Heart left ventricle (tissue), 16 donors: ENCODE measurements at regions of chr5 and their contacts with region 1.

Region 1: DNA sequence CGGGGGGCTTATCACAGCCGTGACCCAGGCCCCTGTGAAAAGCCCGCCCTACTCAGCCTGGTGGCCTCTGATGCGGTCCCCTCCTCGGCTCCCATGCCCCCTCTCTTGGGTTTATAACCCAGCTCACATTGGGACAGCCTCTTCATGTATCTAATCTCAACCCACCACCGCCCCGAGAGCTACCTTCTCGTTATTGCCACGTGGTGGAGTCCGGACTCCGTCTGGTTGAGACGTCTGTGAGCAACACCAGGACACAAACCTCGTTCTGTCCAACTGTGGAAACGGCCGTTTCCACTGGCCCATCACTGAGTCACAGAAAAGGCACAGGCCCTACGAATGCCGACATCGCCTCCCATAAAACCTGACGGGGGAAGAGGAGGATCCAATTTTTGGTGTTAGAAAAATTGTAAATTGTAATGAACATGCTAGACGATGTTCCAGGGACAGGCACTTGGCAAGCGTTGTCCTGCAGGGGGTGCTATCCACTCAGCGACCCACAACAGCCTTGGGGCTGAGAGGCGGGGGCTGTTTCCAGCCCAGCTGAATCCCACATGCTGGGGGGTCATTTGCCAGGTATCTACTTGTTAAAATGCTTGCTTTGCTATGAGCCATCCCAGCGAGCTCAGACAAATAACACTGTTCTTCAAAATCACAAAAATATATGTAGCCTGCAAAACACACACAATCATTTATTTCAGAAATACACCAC is 37.3 kb upstream of the N4BP3 start:
- DNase-seq: peak; percentile 54 to 76 (median 67)
- ATAC-seq: peak; percentile 67 to 92 (median 79)
- H3K4me3 ChIP-seq: no peak overlapping the region
- H3K27ac ChIP-seq: no peak overlapping the region
- H3K4me1 ChIP-seq: peaks cover 0 to 6% (median 0%) of the 10 kb centered on the region in 12 donors
- H3K27me3 ChIP-seq: peaks cover 0 to 34% (median 13%) of the 10 kb centered on the region in 9 donors
- CTCF ChIP-seq: peak; percentile 79 to 91 (median 86)
- POLR2A ChIP-seq: no peak

Region 2: DNA sequence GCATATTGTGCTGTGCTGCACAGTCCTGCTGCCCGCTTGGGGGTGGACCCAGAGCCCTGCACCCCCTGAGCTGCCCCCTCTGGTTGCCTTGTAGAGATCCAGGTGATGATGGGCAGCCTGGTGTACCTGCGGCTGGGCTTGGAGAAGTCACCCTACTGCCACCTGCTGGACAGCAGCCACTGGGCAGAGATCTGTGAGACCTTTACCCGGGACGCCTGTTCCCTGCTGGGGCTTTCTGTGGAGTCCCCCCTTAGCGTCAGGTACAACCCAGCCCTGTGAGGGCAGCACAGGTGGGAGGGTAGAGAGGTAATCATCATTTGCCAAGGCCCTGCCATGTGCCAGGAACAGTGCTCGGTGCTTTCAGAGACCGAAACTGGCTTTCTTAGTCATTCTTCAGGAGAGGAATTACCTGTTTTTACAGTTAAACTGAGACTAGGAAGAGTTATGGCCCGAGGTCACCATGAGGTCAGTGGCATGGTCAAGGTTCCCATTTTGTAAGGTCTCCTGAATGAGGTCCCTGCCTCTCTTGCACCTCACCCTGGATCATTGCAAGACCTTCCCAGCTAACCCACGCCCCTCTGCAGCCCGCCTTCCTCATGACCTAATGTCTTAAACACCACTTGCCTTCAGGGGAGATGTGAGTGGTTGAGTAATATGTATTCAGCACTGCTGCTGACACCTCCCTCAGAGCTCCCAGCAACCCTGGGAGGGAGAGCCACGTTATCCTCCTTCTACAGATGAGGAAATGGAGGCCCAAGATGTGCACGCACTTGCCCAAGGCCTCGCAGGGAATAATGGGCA is 70.2 kb after region 1 on chr5:
- intact Hi-C with region 1: loop called in 9 of 10 experiments (anchors 1 to 5 kb)
- DNase-seq: peak; percentile 46 to 77 (median 57)
- ATAC-seq: peak in 3 of 4 donors; percentile 31 to 46 (median 43)
- H3K4me3 ChIP-seq: no peak overlapping the region
- H3K27ac ChIP-seq: no peak overlapping the region
- H3K4me1 ChIP-seq: peaks cover 0 to 11% (median 3%) of the 10 kb centered on the region in 12 donors
- H3K27me3 ChIP-seq: no peaks in the 10 kb centered on the region
- CTCF ChIP-seq: peak; percentile 51 to 75 (median 65)
- POLR2A ChIP-seq: no peak

Region 3: GRCh38 chr5:178163772-178164735 is 88.1 kb after region 1 on chr5:
- intact Hi-C with region 1: loop called (anchors 1 to 2 kb)
- DNase-seq: peak; percentile 80 to 92 (median 82)
- ATAC-seq: peak; percentile 84 to 96 (median 96)
- H3K4me3 ChIP-seq: peak overlapping the region in 7 of 12 donors; percentile 6 to 35 (median 33)
- H3K27ac ChIP-seq: no peak overlapping the region
- H3K4me1 ChIP-seq: peaks cover 0 to 11% (median 5%) of the 10 kb centered on the region in 12 donors
- H3K27me3 ChIP-seq: peaks cover 6 to 35% (median 16%) of the 10 kb centered on the region in 9 donors
- CTCF ChIP-seq: peak; percentile 96 to 100 (median 99)
- POLR2A ChIP-seq: no peak

Region 4: GRCh38 chr5:178241231-178241663 is 165.3 kb after region 1 on chr5:
- intact Hi-C with region 1: no loop called
- DNase-seq: peak in 1 of 5 donors; percentile 61
- ATAC-seq: peak in 3 of 4 donors; percentile 16 to 56 (median 30)
- H3K4me3 ChIP-seq: no peak overlapping the region
- H3K27ac ChIP-seq: peak overlapping the region in 6 of 12 donors; percentile 11 to 92 (median 55)
- H3K4me1 ChIP-seq: peaks cover 3 to 66% (median 37%) of the 10 kb centered on the region in 12 donors
- H3K27me3 ChIP-seq: no peaks in the 10 kb centered on the region
- CTCF ChIP-seq: no peak
- POLR2A ChIP-seq: no peak